ENCODE measurements at regions of chr14 and their contacts with region 1.

Region 1: DNA sequence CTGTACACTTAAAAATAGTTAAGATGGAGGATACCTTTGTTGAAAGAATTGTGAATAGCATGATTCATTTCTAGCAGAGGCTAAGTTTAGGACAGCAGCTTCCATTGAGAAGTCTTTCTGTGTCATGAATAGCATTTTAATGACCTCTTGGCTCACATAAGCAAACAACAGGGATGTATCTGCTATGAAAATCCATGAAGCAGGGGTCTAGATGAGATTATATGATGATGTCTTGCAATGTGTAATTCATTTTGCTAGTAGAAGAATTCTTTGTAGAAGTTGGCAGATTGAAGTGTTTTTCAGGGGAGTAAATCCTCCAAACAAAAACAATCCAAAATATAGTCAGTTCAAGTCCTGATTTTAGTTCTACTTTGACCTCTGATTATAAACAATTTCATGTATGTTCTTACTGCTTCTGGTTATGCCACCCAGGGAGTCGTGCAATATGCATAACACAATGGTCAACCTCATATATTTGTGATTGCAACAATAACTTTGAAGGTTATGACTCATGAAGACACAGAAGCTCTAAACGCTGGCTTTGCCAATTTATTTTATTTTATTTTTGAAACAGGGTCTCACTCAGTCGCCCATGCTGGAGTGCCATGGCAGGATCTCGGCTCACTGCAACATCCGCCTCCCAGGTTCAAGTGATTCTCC is 6.9 kb upstream of the RD3L start:
- DNase-seq: no peak
- H3K4me3 ChIP-seq: no peak overlapping the region
- H3K27me3 ChIP-seq: no peaks in the 10 kb centered on the region
- CTCF ChIP-seq: no peak

Region 2: DNA sequence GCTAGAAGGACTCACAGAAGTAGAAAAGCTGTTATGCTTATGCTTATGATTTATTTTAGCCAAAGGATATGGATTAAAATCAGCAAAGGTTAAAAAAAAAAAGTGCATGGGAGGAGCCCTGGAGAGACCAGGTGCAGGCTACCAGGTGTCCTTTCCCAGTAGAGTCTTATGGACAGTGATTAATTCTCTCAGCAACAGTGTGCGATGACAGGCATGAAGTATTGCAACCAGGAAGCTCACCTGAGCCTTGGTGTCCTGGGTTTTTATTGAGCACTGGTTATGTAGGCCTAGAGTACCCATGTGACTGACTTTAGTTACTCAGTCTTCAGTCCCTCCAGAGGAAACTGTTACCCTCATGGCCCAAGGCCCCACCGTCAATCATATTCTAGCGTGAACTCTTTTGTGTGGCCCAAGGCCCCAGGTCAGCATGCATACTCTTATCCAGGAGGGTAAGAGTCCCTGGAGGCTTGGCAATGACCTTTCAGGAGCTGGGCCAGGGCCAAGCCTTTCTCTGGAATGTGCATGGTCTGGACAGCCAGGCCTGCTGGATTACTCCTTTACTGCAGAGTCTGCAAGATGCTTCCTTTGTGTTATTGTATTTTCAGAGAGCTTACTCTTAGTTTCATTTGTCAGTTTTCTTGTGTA is 62.7 kb after region 1 on chr14:
- CTCF ChIA-PET with region 1: no interaction called
- POLR2A ChIA-PET with region 1: interaction called, 18 read pairs
- DNase-seq: no peak
- H3K4me3 ChIP-seq: no peak overlapping the region
- H3K27me3 ChIP-seq: 0 out of 2 replicates have a peak, but pooled peaks cover under 1% of the 10 kb centered on the region
- CTCF ChIP-seq: no peak

Region 3: GRCh38 chr14:104048758-104049507 is 99.7 kb after region 1 on chr14:
- CTCF ChIA-PET with region 1: no interaction called
- POLR2A ChIA-PET with region 1: no interaction called
- DNase-seq: no peak
- H3K4me3 ChIP-seq: no peak overlapping the region
- H3K27me3 ChIP-seq: no peaks in the 10 kb centered on the region
- CTCF ChIP-seq: no peak